Heart left ventricle (tissue), 16 donors: ENCODE measurements at regions of chr12 and their contacts with region 1.

Region 1: GRCh38 chr12:111753144-111753881 is 13.4 kb upstream of the ALDH2 start:
- DNase-seq: peak; percentile 60 to 75 (median 72)
- ATAC-seq: peak; percentile 55 to 84 (median 79)
- H3K4me3 ChIP-seq: no peak overlapping the region
- H3K27ac ChIP-seq: peak overlapping the region in 10 of 12 donors; percentile 54 to 87 (median 68)
- H3K4me1 ChIP-seq: peaks cover 0 to 67% (median 21%) of the 10 kb centered on the region in 12 donors
- H3K27me3 ChIP-seq: no peaks in the 10 kb centered on the region
- CTCF ChIP-seq: peak; percentile 57 to 90 (median 84)
- POLR2A ChIP-seq: no peak

Region 2: GRCh38 chr12:111788178-111788654 is 34.9 kb after region 1 on chr12:
- intact Hi-C with region 1: loop called in 9 of 10 experiments (anchors 1 to 5 kb)
- DNase-seq: peak in 3 of 5 donors; percentile 44 to 67 (median 50)
- ATAC-seq: peak; percentile 57 to 79 (median 64)
- H3K4me3 ChIP-seq: no peak overlapping the region
- H3K27ac ChIP-seq: peak overlapping the region in 1 of 12 donors; percentile 56
- H3K4me1 ChIP-seq: peaks cover 0 to 9% (median 0%) of the 10 kb centered on the region in 12 donors
- H3K27me3 ChIP-seq: no peaks in the 10 kb centered on the region
- CTCF ChIP-seq: peak in 11 of 12 donors; percentile 19 to 62 (median 48)
- POLR2A ChIP-seq: no peak

Region 3: GRCh38 chr12:111812881-111813741 is 59.8 kb after region 1 on chr12:
- intact Hi-C with region 1: loop called (anchors 1 to 5 kb)
- DNase-seq: peak; percentile 69 to 80 (median 74)
- ATAC-seq: peak; percentile 71 to 92 (median 90)
- H3K4me3 ChIP-seq: no peak overlapping the region
- H3K27ac ChIP-seq: no peak overlapping the region
- H3K4me1 ChIP-seq: peaks cover 0 to 8% (median 2%) of the 10 kb centered on the region in 12 donors
- H3K27me3 ChIP-seq: no peaks in the 10 kb centered on the region
- CTCF ChIP-seq: peak; percentile 67 to 88 (median 80)
- POLR2A ChIP-seq: no peak